ENCODE measurements at regions of chr7 and their contacts with region 1.

Region 1: GRCh38 chr7:134701272-134701671 is 54.6 kb downstream of the BPGM start:
- DNase-seq: peak; percentile 55
- H3K4me3 ChIP-seq: no peak overlapping the region
- H3K27ac ChIP-seq: no peak overlapping the region
- H3K4me1 ChIP-seq: peaks cover 13% of the 10 kb centered on the region
- H3K27me3 ChIP-seq: no peaks in the 10 kb centered on the region
- CTCF ChIP-seq: peak; percentile 54 to 55
- POLR2A ChIP-seq: no peak

Region 2: DNA sequence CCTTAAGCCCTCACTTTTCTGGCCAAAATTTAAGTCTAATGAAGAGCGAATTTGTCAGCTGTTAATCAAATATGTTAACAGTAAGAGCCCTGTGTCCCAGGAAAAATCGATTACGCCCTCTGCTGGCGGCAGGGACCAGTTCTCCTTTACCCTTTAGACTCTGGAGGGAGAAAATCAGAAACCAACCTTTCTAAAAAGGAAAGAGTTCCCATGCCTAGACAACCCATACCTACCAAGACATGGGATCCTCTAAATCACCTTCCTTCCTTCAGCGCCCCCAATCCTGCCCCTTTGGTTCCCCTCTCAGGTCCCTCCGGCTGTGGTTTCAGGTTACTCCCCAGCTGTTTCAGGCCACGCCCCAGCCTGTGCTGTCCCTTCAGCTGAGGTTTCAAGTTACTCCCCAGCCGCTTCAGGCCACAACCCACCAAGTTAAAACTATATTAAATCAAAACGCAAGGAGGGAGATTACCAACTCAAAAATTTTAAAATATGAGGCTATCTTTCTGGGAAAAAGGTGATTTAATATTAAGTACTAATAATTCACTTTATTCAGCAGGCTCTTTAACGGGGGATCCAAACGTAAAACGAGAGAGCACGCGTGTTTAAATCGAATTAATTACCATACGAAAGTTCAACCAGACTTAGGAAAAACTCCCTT is 153.7 kb before region 1 on chr7:
- CTCF ChIA-PET with region 1: no interaction called
- POLR2A ChIA-PET with region 1: no interaction called
- dilution Hi-C with region 1: no loop called
- intact Hi-C with region 1: loop called (anchors 1 kb)
- DNase-seq: peak; percentile 79
- H3K4me3 ChIP-seq: peak overlapping the region; percentile 21 to 70 (median 62)
- H3K27ac ChIP-seq: no peak overlapping the region
- H3K4me1 ChIP-seq: peaks cover 7% of the 10 kb centered on the region
- H3K27me3 ChIP-seq: peaks cover 10 to 15% of the 10 kb centered on the region in 2 experiments
- CTCF ChIP-seq: peak; percentile 78 to 90
- POLR2A ChIP-seq: no peak

Region 3: DNA sequence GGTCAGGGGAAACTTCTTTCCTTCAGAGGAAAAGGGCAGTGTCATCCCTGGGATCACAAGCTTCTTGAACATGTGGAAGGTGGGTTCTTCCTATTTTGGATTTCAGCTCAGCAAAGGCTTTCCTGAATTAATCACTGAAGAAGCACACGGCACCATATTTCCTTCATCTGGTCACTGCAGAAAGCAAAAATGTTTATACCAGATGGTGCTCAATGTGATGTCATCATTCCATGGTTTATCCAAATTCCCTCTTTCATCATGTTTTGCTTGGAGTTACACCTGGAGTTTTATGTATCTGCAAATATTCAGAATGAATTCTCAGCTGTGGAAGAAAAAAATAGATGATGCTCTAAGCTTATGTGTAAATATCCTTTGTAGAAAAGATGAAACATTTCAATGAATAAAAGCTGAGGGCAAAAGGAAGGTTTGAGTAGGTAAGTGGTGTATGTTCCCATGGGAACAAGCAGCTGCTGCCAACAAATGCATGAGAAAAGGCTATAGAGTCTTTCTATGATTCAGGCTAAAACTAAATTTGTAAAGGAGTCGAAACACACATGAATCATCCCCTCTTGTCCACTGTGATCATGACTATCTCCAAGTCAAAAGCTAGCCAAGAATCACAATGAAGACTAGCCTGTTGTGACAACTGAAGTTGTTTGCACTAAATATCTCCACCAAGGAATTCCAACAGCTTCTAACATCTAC is 81.5 kb before region 1 on chr7:
- CTCF ChIA-PET with region 1: interaction called, 10 read pairs
- POLR2A ChIA-PET with region 1: no interaction called
- dilution Hi-C with region 1: no loop called
- intact Hi-C with region 1: loop called (anchors 1 kb)
- DNase-seq: peak; percentile 83
- H3K4me3 ChIP-seq: no peak overlapping the region
- H3K27ac ChIP-seq: peak overlapping the region; percentile 23
- H3K4me1 ChIP-seq: peaks cover 26% of the 10 kb centered on the region
- H3K27me3 ChIP-seq: no peaks in the 10 kb centered on the region
- CTCF ChIP-seq: no peak
- POLR2A ChIP-seq: no peak

Region 4: DNA sequence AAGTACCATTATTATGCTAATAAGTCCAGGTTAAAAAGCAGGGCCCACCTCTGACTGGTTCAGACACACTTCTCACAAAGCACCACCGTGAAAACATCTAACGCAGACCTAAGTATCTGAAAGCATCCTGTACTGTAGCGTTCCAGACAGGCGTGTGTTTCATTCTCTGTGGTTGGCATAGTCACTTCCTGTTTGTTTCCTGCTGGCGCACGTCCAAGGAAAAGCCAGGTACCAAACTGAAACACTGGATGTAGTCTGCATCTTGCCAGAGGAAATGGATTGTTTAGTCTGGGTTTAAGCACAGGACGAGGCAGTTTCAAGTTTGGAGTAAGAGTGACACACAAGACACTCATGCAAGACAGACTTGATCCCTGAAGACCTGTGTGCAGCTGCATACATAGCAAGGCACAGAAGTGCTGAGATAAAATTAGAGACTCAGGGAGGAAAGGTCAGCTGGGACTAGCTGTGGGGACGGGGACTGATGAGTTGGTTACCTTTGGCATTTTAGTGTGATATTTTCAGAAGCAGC is 31.4 kb before region 1 on chr7:
- CTCF ChIA-PET with region 1: interaction called, 6 read pairs
- POLR2A ChIA-PET with region 1: no interaction called
- dilution Hi-C with region 1: no loop called
- intact Hi-C with region 1: loop called (anchors 2 kb)
- DNase-seq: peak; percentile 99
- H3K4me3 ChIP-seq: peak overlapping the region in 1 of 3 experiments; percentile 10
- H3K27ac ChIP-seq: peak overlapping the region; percentile 100
- H3K4me1 ChIP-seq: peaks cover 50% of the 10 kb centered on the region
- H3K27me3 ChIP-seq: no peaks in the 10 kb centered on the region
- CTCF ChIP-seq: no peak
- POLR2A ChIP-seq: no peak

Region 5: GRCh38 chr7:134750083-134751062 is 49.1 kb after region 1 on chr7:
- CTCF ChIA-PET with region 1: interaction called, 11 read pairs
- POLR2A ChIA-PET with region 1: no interaction called
- dilution Hi-C with region 1: no loop called
- intact Hi-C with region 1: no loop called
- DNase-seq: peak; percentile 51
- H3K4me3 ChIP-seq: no peak overlapping the region
- H3K27ac ChIP-seq: no peak overlapping the region
- H3K4me1 ChIP-seq: no peaks in the 10 kb centered on the region
- H3K27me3 ChIP-seq: no peaks in the 10 kb centered on the region
- CTCF ChIP-seq: peak; percentile 68 to 76
- POLR2A ChIP-seq: no peak

Region 6: DNA sequence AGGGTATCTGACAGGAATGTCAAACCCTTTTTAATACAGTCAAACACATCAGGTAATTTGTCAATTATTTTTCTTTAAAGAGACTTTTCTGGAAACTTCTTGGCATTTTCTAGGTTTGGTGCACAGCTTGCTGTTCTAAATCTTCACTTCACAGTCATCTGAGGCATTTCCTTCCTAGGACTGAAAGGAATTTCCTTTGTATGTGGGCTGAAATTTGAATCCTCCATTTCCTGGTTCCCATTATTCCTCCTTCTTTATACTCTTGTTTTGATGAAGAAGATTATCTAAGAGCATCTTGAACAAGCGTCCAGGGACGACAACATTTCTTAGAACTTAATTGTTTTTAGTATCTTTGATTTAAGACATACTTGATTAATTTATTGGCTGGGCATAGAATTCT is 103.1 kb after region 1 on chr7:
- CTCF ChIA-PET with region 1: no interaction called
- POLR2A ChIA-PET with region 1: no interaction called
- dilution Hi-C with region 1: no loop called
- intact Hi-C with region 1: no loop called
- DNase-seq: peak; percentile 85
- H3K4me3 ChIP-seq: peak overlapping the region in 1 of 3 experiments; percentile 35
- H3K27ac ChIP-seq: peak overlapping the region; percentile 96
- H3K4me1 ChIP-seq: peaks cover 49% of the 10 kb centered on the region
- H3K27me3 ChIP-seq: no peaks in the 10 kb centered on the region
- CTCF ChIP-seq: no peak
- POLR2A ChIP-seq: no peak

Region 7: GRCh38 chr7:134954197-134955082 is 253.2 kb after region 1 on chr7:
- CTCF ChIA-PET with region 1: no interaction called
- POLR2A ChIA-PET with region 1: no interaction called
- dilution Hi-C with region 1: no loop called
- intact Hi-C with region 1: loop called (anchors 2 kb)
- DNase-seq: peak; percentile 38
- H3K4me3 ChIP-seq: no peak overlapping the region
- H3K27ac ChIP-seq: no peak overlapping the region
- H3K4me1 ChIP-seq: no peaks in the 10 kb centered on the region
- H3K27me3 ChIP-seq: no peaks in the 10 kb centered on the region
- CTCF ChIP-seq: peak; percentile 20 to 37
- POLR2A ChIP-seq: no peak